Activated naive CD4-positive, alpha-beta T cell treated with anti-CD3 and anti-CD28 coated beads, Interleukin-2, amount 10 ng/mL, durations not matched to agents 7 days and 5 days (primary cell): ENCODE measurements at regions of chr20 and their contacts with region 1.

Region 1: GRCh38 chr20:23420943-23421931 is at the start of gene NAPB:
- DNase-seq: peak; percentile 96
- H3K4me3 Mint-ChIP-seq: peak within 1 kb of the TSS; percentile 84
- H3K27ac Mint-ChIP-seq: peak within 1 kb of the TSS; percentile 86
- H3K4me1 Mint-ChIP-seq: peaks cover 51% of the 10 kb centered on the region
- H3K27me3 Mint-ChIP-seq: peaks cover 21% of the 10 kb centered on the region

Region 2: DNA sequence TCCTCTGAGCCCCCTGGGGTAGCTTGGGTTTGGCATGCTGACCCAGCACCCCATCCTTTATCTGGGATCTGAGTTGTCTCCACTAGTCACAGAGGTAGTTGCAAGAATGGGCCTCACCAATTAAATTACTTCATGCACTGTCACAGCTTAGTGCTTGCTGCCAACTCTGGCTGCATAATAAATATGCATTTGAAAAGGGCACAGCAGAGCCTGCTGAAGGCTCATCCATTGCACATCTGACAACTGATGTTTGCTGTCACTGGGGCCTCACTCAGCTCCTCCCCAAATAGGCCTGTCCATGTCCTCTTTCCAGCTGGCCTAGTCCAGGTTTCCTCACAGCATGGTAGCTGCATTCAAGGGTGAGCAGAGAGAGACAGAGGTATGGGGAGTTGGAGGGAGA is 83.9 kb before region 1 on chr20:
- CTCF ChIA-PET with region 1: no interaction called
- DNase-seq: no peak
- H3K4me3 Mint-ChIP-seq: no peak overlapping the region
- H3K27ac Mint-ChIP-seq: no peak overlapping the region
- H3K4me1 Mint-ChIP-seq: peaks cover 9% of the 10 kb centered on the region
- H3K27me3 Mint-ChIP-seq: peaks cover 11% of the 10 kb centered on the region

Region 3: DNA sequence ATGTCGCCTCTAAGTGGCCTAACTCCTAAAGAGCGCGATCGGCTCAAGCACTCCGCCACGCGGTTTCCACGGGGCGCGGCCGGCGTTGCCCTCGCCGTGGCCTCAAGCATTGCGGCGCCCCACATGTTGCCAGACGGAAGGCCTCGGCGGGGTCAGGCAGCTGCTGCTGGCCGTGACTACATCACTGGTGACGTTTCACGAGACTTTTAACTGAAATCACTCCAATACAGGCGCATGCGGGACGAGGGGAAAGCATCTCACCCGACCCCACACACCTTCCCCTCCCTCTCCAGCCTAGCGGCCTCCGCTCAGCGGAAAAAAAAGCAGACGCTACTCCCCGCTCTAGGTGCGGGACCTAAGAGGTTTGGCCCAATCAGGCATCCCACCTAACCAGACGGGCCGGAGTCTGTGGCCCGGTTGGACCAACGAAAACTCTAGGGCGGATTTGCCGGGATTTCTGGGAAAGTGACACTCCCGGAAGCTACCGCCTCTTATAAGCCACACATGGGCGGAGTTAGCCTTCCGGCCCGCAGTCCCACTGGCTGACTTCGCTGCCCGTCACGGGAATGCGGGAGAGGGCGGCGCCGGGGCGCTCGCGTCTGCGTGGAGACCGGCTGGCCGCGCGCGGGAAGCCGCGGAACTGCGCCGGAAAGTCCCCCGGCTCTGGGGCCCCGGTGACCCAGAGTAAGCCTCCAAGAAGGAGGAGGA is 70.9 kb before region 1 on chr20 and contains the start of gene NXT1:
- CTCF ChIA-PET with region 1: interaction called, 11 read pairs
- DNase-seq: peak; percentile 96
- H3K4me3 Mint-ChIP-seq: peak within 1 kb of the TSS; percentile 81
- H3K27ac Mint-ChIP-seq: peak within 1 kb of the TSS; percentile 100
- H3K4me1 Mint-ChIP-seq: peaks cover 40% of the 10 kb centered on the region
- H3K27me3 Mint-ChIP-seq: no peaks in the 10 kb centered on the region

Region 4: DNA sequence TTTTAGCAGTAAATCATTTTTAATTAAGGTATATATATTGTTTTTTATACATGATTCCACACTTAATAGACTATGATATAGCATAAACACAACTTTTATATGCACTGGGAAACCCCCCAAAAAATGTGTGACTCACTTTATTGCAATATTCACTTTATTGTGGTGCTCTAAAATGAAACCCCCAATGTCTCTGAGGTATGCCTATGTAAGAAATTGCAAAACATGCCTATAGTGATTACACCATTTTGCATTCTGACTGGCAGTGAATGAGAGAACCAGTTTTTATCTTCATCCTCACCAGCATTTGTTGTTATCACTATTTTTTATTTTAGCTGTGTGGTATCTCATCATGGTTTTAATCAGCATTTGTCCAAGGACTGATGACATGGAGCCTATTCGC is 39.9 kb after region 1 on chr20:
- CTCF ChIA-PET with region 1: no interaction called
- DNase-seq: no peak
- H3K4me3 Mint-ChIP-seq: no peak overlapping the region
- H3K27ac Mint-ChIP-seq: no peak overlapping the region
- H3K4me1 Mint-ChIP-seq: peaks cover 11% of the 10 kb centered on the region
- H3K27me3 Mint-ChIP-seq: peaks cover 3% of the 10 kb centered on the region

Region 5: DNA sequence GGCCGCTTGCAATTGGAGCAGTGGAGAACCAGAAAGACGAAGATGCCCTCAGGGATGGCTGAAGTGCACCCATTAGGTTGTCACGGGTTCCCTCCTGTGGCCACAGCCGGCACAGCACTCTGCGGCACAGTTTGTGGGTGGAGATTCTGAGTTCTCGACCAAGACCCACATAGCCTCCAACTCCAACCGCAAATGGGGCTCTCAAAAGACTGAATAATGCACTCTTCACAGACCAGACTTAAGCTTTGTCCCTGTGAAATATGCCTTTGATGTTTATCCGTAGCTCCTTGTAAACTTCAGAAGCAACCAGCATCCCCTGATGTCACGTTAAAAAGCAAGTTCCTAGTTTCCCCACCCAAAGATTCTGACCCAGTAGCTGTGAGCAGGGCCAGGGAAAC is 185.4 kb after region 1 on chr20:
- CTCF ChIA-PET with region 1: no interaction called
- DNase-seq: peak; percentile 77
- H3K4me3 Mint-ChIP-seq: no peak overlapping the region
- H3K27ac Mint-ChIP-seq: no peak overlapping the region
- H3K4me1 Mint-ChIP-seq: no peaks in the 10 kb centered on the region
- H3K27me3 Mint-ChIP-seq: peaks cover 14% of the 10 kb centered on the region